Panc1 (cell line): ENCODE measurements at regions of chr1 and their contacts with region 1.

Region 1: GRCh38 chr1:16187748-16188401 is 24.6 kb downstream of the ARHGEF19 start:
- DNase-seq: peak; percentile 86
- ATAC-seq: peak; percentile 81
- H3K4me3 ChIP-seq: no peak overlapping the region
- H3K27ac ChIP-seq: peak overlapping the region; percentile 85
- H3K4me1 ChIP-seq: peaks cover 68% of the 10 kb centered on the region
- H3K27me3 ChIP-seq: no peaks in the 10 kb centered on the region
- CTCF ChIP-seq: peak; percentile 98

Region 2: GRCh38 chr1:16122916-16123315 is 65.0 kb before region 1 on chr1:
- CTCF ChIA-PET with region 1: no interaction called
- POLR2A ChIA-PET with region 1: no interaction called
- in situ Hi-C with region 1: no loop called
- intact Hi-C with region 1: loop called (anchors 10 kb)
- DNase-seq: no peak
- ATAC-seq: peak; percentile 4
- H3K4me3 ChIP-seq: no peak overlapping the region
- H3K27ac ChIP-seq: peak overlapping the region; percentile 83
- H3K4me1 ChIP-seq: peaks cover 83% of the 10 kb centered on the region
- H3K27me3 ChIP-seq: no peaks in the 10 kb centered on the region
- CTCF ChIP-seq: no peak